Lower lobe of right lung (tissue), 2 donors: ENCODE measurements at regions of chr2 and their contacts with region 1.

Region 1: DNA sequence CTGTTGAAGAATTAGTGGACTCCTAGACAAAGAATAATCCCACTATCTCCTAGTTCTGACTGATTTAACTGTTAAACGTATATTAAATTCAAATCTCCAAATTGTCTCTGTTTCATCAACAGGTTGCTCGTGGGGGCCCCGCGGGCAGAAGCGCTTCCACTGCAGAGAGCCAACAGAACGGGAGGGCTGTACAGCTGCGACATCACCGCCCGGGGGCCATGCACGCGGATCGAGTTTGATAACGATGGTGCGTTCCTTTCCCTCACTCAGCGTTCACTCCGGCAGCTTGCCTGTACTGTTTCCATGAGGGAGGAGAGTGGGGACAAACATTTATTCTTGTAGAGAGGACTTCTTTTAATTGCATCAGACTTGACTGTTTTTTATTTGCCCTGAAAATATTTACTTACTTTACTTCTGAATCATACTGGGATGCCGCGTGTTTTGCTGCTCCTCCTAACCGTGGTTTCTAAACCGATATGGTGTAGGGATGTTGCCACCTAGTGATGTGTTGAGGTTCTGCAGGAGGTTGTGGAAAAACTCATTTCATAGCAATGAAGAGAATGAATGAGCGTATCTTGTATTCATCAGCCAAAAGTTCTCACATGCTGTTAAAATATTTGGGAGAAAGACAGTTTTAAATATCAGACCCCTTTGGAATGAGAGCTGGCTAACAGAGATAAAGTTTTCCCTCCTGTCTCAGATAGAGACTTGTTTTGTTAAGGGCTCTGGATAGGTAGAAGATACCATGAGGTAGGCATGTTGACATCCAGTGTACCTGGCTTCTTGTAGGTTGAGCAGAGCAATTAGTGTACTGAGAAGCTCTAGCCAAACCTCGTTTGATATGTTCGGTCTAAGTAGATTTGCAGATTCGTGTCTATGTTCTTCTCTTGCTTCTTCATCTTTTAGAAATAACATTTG is 38.3 kb downstream of the ITGA6 start:
- DNase-seq: peak; percentile 54
- ATAC-seq: peak; percentile 83 to 84
- H3K4me3 ChIP-seq: peak overlapping the region; percentile 18
- H3K27ac ChIP-seq: no peak overlapping the region
- H3K4me1 ChIP-seq: peaks cover 47% of the 10 kb centered on the region
- H3K27me3 ChIP-seq: peaks cover 4% of the 10 kb centered on the region
- CTCF ChIP-seq: peak; percentile 82

Region 2: DNA sequence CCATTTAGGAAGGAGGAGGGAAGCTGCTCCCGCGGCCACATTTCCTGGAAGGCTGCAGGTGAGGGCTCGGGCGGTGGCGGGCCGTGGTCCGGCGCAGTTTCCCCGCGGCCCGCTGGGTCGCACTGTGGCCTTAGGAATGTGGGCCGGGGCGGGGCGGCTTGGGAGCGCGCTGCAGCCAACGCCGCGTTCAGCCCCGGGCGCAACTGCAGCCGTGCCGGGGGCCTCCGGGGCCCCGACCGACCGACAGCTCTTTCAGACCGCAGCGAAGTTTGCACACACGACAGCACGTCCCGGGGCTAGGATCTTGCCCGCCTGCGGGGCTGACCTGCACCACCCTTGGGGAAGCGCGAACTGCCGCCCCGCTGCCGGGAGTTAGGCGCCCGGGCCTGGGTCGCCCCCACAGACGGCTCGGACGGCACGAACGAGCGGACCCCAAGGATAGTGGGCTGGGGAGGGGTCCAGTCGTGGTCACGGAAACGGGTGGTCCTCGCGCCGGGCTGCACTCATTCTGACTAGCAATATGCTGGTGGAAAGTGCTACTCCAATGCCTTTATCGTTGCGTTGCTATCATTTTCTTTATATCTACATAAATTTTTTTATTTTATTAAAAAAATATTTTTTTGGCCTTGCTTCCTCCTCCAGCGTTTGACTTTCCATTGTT is 293.0 kb before region 1 on chr2:
- intact Hi-C with region 1: loop called (anchors 10 kb)
- DNase-seq: peak; percentile 82
- ATAC-seq: peak; percentile 98 to 100
- H3K4me3 ChIP-seq: peak overlapping the region; percentile 62
- H3K27ac ChIP-seq: no peak overlapping the region
- H3K4me1 ChIP-seq: peaks cover 12% of the 10 kb centered on the region
- H3K27me3 ChIP-seq: peaks cover 11% of the 10 kb centered on the region
- CTCF ChIP-seq: peak; percentile 87

Region 3: GRCh38 chr2:172516299-172516698 is 50.6 kb after region 1 on chr2:
- intact Hi-C with region 1: no loop called
- DNase-seq: no peak
- ATAC-seq: no peak
- H3K4me3 ChIP-seq: no peak overlapping the region
- H3K27ac ChIP-seq: no peak overlapping the region
- H3K4me1 ChIP-seq: no peaks in the 10 kb centered on the region
- H3K27me3 ChIP-seq: no peaks in the 10 kb centered on the region
- CTCF ChIP-seq: no peak

Region 4: DNA sequence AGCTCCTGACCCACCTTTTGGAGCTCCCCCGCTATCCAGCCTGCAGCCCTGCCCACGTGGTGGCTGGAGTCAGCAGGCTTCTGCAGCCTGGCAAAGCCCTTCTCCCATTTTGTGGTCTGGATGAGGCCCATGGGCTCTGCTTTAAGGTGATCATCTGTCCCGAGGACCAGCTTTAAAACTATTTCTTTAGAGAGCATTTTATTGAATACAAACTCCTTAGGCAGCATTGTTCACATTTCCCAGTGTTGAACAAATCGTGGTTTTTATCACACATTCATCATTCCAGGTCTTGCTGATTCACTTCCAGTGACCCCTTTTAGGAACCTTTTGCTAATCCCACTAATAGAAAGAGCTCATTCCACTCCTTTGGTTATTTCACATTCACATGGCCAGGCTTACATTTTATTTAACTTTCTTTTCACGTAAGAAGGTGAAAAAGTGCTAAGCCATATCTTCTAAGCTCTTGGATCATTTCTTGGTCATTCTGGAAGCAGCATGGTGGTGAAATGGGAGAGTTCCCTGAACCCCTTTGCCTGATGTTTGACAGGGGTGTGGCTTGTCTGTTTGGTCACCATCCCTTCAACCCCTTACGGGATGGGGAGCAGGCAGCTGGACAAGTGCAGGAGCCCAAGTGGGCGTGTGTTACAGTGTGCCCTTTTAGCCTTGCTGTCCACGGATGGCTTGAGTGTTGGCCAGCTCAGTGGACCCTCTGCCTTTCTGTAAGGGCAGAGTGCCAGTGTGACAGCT is 189.6 kb after region 1 on chr2:
- intact Hi-C with region 1: no loop called
- DNase-seq: no peak
- ATAC-seq: no peak
- H3K4me3 ChIP-seq: no peak overlapping the region
- H3K27ac ChIP-seq: no peak overlapping the region
- H3K4me1 ChIP-seq: no peaks in the 10 kb centered on the region
- H3K27me3 ChIP-seq: no peaks in the 10 kb centered on the region
- CTCF ChIP-seq: no peak